CD4-positive, alpha-beta memory T cell (primary cell): ENCODE measurements at regions of chr17 and their contacts with region 1.

Region 1: DNA sequence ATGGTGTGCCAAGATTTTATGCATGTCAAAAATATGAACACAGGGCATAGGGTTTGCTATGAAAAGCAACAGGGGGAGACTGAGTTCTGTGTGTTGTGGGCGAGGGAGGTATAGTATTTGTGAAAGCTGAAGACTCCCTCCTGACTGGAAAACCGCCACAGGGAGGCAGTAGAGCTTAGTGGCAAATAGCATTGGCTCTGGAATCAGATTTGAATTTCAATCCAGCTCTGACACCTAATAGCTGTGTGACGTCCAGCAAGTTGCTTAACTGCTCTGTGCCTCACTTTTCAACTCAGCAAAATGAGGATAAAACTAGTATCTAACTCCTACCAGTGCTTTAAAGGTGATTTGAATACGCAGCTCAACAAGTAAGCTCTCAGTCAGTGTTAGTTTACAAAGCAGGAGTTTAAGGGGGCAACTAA is 22.0 kb downstream of the KPNA2 start:
- DNase-seq: peak; percentile 43 to 63 (median 51)
- H3K4me3 ChIP-seq: no peak overlapping the region
- H3K4me3 Mint-ChIP-seq: no peak overlapping the region
- H3K27ac ChIP-seq: no peak overlapping the region
- H3K27ac Mint-ChIP-seq: no peak overlapping the region
- H3K4me1 ChIP-seq: peaks cover 5% of the 10 kb centered on the region
- H3K4me1 Mint-ChIP-seq: peaks cover 0 to 19% (median 4%) of the 10 kb centered on the region in 4 donors
- H3K27me3 ChIP-seq: no peaks in the 10 kb centered on the region
- H3K27me3 Mint-ChIP-seq: no peaks in the 10 kb centered on the region

Region 2: GRCh38 chr17:68101075-68101992 is 43.8 kb after region 1 on chr17:
- CTCF ChIA-PET with region 1: interaction called, 3 read pairs
- POLR2A ChIA-PET with region 1: interaction called, 3 read pairs
- intact Hi-C with region 1: loop called (anchors 2 kb)
- DNase-seq: peak; percentile 43 to 65 (median 62)
- H3K4me3 ChIP-seq: peak overlapping the region; percentile 42 to 48
- H3K4me3 Mint-ChIP-seq: peak overlapping the region; percentile 94 to 98 (median 96)
- H3K27ac ChIP-seq: peak overlapping the region; percentile 73
- H3K27ac Mint-ChIP-seq: peak overlapping the region; percentile 91 to 98 (median 96)
- H3K4me1 ChIP-seq: peaks cover 23% of the 10 kb centered on the region
- H3K4me1 Mint-ChIP-seq: peaks cover 25 to 53% (median 37%) of the 10 kb centered on the region in 4 donors
- H3K27me3 ChIP-seq: no peaks in the 10 kb centered on the region
- H3K27me3 Mint-ChIP-seq: no peaks in the 10 kb centered on the region

Region 3: GRCh38 chr17:68346448-68346847 is 288.9 kb after region 1 on chr17:
- CTCF ChIA-PET with region 1: no interaction called
- POLR2A ChIA-PET with region 1: no interaction called
- intact Hi-C with region 1: no loop called
- DNase-seq: peak; percentile 57 to 73 (median 63)
- H3K4me3 ChIP-seq: peak overlapping the region; percentile 1 to 36
- H3K4me3 Mint-ChIP-seq: peak overlapping the region; percentile 67 to 91 (median 82)
- H3K27ac ChIP-seq: peak overlapping the region; percentile 62
- H3K27ac Mint-ChIP-seq: peak overlapping the region; percentile 92 to 96 (median 93)
- H3K4me1 ChIP-seq: peaks cover 76% of the 10 kb centered on the region
- H3K4me1 Mint-ChIP-seq: peaks cover 53 to 82% (median 70%) of the 10 kb centered on the region in 4 donors
- H3K27me3 ChIP-seq: no peaks in the 10 kb centered on the region
- H3K27me3 Mint-ChIP-seq: no peaks in the 10 kb centered on the region

Region 4: GRCh38 chr17:68446626-68447041 is 389.1 kb after region 1 on chr17:
- CTCF ChIA-PET with region 1: no interaction called
- POLR2A ChIA-PET with region 1: no interaction called
- intact Hi-C with region 1: loop called (anchors 5 kb)
- DNase-seq: no peak
- H3K4me3 ChIP-seq: no peak overlapping the region
- H3K4me3 Mint-ChIP-seq: no peak overlapping the region
- H3K27ac ChIP-seq: no peak overlapping the region
- H3K27ac Mint-ChIP-seq: peak overlapping the region in 2 of 7 donors; percentile 23 to 36
- H3K4me1 ChIP-seq: peaks cover under 1% of the 10 kb centered on the region
- H3K4me1 Mint-ChIP-seq: peaks cover 2 to 4% (median 2%) of the 10 kb centered on the region in 4 donors
- H3K27me3 ChIP-seq: no peaks in the 10 kb centered on the region
- H3K27me3 Mint-ChIP-seq: no peaks in the 10 kb centered on the region

Region 5: GRCh38 chr17:68463211-68464019 is 405.9 kb after region 1 on chr17:
- CTCF ChIA-PET with region 1: interaction called, 60 read pairs
- POLR2A ChIA-PET with region 1: no interaction called
- intact Hi-C with region 1: loop called (anchors 1 kb)
- DNase-seq: no peak
- H3K4me3 ChIP-seq: no peak overlapping the region
- H3K4me3 Mint-ChIP-seq: peak overlapping the region in 1 of 8 donors; percentile 59
- H3K27ac ChIP-seq: no peak overlapping the region
- H3K27ac Mint-ChIP-seq: peak overlapping the region in 5 of 7 donors; percentile 18 to 90 (median 66)
- H3K4me1 ChIP-seq: peaks cover 41% of the 10 kb centered on the region
- H3K4me1 Mint-ChIP-seq: peaks cover 34 to 47% (median 39%) of the 10 kb centered on the region in 4 donors
- H3K27me3 ChIP-seq: no peaks in the 10 kb centered on the region
- H3K27me3 Mint-ChIP-seq: no peaks in the 10 kb centered on the region